ENCODE measurements at regions of chr16 and their contacts with region 1.

Region 1: DNA sequence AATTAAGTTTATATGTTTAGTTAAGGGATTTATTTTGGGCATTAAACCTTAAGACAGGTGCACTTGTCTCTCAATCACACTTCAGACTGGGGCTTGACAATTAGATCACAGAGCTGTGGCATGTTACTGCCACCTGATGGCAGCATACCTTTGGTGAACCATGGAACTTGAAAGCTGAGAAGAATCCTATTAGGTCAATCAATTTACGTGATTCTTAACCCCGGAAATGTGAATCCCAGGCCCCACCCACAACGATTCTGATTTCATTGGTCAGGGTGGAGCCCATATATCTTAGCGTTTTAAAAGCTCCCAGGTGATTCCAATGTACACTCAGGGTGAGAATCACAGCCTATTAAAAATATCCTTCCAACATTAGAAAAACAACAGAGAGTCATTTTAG is 91.0 kb downstream of the GSG1L start:
- DNase-seq: peak; percentile 59
- H3K4me3 ChIP-seq: no peak overlapping the region
- H3K27ac ChIP-seq: no peak overlapping the region
- H3K4me1 ChIP-seq: no peaks in the 10 kb centered on the region; a peak in 1 of 4 replicates
- H3K27me3 ChIP-seq: no peaks in the 10 kb centered on the region
- CTCF ChIP-seq: peak; percentile 49
- EP300 ChIP-seq: no peak
- RAD21 ChIP-seq: peak; percentile 83

Region 2: DNA sequence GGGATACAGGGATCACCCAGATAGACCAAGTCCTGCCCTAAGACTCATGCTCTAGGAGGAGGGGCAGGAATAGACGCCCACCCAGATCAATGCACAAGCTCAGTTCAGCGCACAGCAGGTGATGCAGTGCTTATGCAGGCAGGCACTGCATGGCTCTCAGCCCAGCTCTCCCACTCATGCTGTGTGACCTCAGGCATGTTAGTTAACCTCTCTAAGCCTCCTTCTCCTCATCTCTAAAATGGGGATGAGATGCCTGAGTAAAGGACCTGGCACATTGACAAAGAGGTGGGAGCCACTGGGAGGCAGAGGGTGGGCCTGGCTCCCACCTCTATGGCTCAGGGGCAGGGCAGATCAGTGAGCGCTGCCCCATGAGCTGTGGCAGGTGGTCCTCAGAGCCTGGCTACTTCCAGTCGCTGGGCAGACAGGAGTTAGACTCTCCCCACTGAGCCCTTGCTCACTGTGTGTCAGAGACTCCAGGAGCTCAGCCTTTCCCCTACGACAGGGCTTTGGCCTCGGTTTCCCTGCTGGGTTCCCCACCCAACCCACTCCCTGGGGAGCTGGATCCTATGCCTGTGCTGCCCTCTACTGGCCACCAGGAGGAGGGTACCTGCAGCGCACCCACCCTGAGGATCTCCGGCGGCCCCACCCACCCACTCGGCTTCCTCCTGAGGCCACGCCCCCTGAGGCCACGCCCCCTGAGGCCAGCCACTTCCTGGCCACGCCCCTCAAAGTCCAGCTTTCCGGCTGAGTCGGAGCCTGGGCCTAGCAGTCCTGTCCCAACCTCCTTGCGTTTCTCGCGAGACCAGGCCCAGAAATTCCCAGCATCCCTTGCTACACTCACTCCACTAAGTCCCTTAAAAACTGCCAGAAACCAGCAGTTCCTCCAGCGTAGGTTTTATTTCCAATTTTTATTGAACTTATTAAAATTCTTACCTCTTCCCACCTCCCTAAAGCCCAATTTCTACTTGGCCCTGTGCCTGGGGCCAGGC is 105.1 kb before region 1 on chr16:
- CTCF ChIA-PET with region 1: interaction called, 13 read pairs
- POLR2A ChIA-PET with region 1: no interaction called
- DNase-seq: peak; percentile 92
- H3K4me3 ChIP-seq: no peak overlapping the region
- H3K27ac ChIP-seq: no peak overlapping the region
- H3K4me1 ChIP-seq: no peaks in the 10 kb centered on the region
- H3K27me3 ChIP-seq: no peaks in the 10 kb centered on the region
- CTCF ChIP-seq: peak; percentile 56
- EP300 ChIP-seq: no peak
- RAD21 ChIP-seq: peak; percentile 70

Region 3: DNA sequence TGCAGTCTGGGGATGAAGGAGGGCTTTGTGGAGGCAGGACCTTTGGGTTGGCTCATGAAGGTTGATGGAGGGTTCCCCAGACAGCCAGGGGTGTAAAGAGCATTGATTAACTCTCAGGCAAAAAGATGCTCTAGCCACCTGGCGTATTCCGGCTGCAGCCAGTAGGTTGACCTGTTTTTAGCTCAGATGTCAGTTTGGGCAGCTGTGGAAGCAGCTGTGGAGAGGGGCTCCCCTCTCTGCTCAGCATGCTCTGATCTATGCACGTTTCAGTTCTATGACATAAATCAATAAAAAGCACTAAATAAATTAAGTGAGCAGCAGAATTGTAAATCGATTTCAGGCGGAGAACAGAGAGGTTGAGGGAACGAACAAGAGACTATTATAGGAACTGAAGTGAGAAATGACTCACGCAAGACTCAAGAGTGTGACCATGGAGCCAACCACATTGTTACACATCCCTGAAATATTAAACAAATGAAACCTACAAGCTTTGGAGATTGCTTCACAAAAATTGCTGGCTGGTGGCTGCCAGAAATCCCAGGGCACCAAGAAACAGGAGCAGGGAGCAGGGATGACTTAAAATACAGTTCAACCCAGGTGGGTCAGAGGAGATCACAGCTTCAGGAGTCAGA is 20.9 kb before region 1 on chr16:
- CTCF ChIA-PET with region 1: interaction called, 13 read pairs
- POLR2A ChIA-PET with region 1: no interaction called
- DNase-seq: no peak
- H3K4me3 ChIP-seq: no peak overlapping the region
- H3K27ac ChIP-seq: no peak overlapping the region
- H3K4me1 ChIP-seq: no peaks in the 10 kb centered on the region
- H3K27me3 ChIP-seq: no peaks in the 10 kb centered on the region; the same call in 1 of the 2 replicates
- CTCF ChIP-seq: no peak
- EP300 ChIP-seq: no peak
- RAD21 ChIP-seq: no peak

Region 4: GRCh38 chr16:27960619-27961295 is 11.7 kb before region 1 on chr16:
- CTCF ChIA-PET with region 1: interaction called, 12 read pairs
- POLR2A ChIA-PET with region 1: no interaction called
- DNase-seq: no peak
- H3K4me3 ChIP-seq: no peak overlapping the region
- H3K27ac ChIP-seq: no peak overlapping the region
- H3K4me1 ChIP-seq: no peaks in the 10 kb centered on the region
- H3K27me3 ChIP-seq: no peaks in the 10 kb centered on the region
- CTCF ChIP-seq: no peak
- EP300 ChIP-seq: no peak
- RAD21 ChIP-seq: no peak

Region 5: GRCh38 chr16:28063641-28064061 is 91.2 kb after region 1 on chr16 and contains the start of gene GSG1L:
- CTCF ChIA-PET with region 1: interaction called, 172 read pairs
- POLR2A ChIA-PET with region 1: no interaction called
- DNase-seq: peak; percentile 83
- H3K4me3 ChIP-seq: peak within 1 kb of the TSS in 1 of 2 experiments; percentile 31; a peak in 2 of 4 replicates
- H3K27ac ChIP-seq: no peak within 1 kb of the TSS
- H3K4me1 ChIP-seq: no peaks in the 10 kb centered on the region
- H3K27me3 ChIP-seq: peaks cover 34% of the 10 kb centered on the region
- CTCF ChIP-seq: no peak
- EP300 ChIP-seq: no peak
- RAD21 ChIP-seq: peak; percentile 28; the same call in 1 of the 2 replicates
- polyA plus RNA-seq, gene GSG1L: not detected in 2 replicates

Region 6: DNA sequence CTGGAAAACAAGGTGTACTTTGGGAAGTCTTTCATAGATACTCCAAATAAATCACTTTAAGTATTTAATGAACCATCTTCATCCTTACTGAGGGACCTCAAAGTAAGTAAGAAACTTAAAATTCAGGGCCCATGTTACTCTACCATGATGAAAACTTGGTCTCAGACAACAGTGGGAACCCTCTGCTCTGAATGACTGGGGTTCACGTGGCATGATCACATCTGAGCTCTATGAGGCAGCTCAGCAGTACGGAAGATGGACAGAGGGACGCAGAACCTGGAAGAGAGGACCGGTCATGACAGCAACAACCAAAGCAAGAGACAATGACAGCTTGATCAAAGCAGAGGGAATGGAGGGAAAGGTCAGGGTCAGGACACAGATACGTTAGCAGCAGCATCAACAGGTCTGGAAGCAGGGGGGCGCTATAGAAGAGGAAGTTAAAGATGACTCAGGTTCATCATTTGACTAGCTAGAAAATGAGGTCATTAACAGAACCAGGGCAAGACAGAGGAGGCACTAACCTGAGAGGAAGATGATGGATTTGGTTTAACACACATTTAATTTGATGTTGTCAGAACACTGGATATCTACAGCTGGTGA is 229.7 kb after region 1 on chr16:
- CTCF ChIA-PET with region 1: no interaction called
- POLR2A ChIA-PET with region 1: no interaction called
- DNase-seq: no peak
- H3K4me3 ChIP-seq: no peak overlapping the region
- H3K27ac ChIP-seq: no peak overlapping the region
- H3K4me1 ChIP-seq: no peaks in the 10 kb centered on the region
- H3K27me3 ChIP-seq: no peaks in the 10 kb centered on the region
- CTCF ChIP-seq: peak; percentile 34; the same call in 1 of the 2 replicates
- EP300 ChIP-seq: no peak
- RAD21 ChIP-seq: no peak

Measured in SK-N-SH (cell line).